Activated CD4-positive, alpha-beta memory T cell treated with anti-CD3 and anti-CD28 coated beads for 36 hours (primary cell): ENCODE measurements at regions of chr7 and their contacts with region 1.

Region 1: DNA sequence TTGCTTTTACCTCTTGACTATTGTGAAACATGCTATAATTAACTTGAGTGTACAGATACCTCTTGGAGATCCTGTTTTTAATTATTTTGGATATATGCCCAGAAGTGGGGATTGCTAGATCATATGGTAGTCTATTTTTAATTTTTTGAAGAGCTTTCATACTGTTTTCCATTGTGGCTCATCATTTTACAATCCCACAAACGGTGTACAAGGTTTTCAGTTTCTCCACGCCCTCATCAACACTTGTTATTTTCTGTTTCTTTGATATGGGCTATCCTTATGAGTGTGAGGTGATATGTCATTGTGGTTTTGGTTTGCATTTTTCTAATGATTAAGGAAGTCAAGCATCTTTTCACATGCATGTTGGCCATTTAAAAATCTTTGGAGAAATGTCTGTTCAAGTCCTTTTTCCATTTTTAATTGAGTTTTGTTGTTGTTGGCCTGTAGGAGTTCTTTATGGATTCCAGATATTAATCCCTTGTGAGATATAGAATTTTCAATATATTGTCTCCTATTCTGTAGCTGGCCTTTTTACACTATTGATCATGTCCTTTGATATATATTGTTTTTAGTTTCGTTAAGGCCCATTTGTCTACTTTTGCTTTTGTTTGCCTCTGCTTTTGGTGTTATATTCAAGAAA is 7.5 kb downstream of the AGK start:
- DNase-seq: peak; percentile 17
- H3K4me3 Mint-ChIP-seq: no peak overlapping the region
- H3K27ac Mint-ChIP-seq: peak overlapping the region; percentile 79
- H3K4me1 Mint-ChIP-seq: peaks cover 64% of the 10 kb centered on the region
- H3K27me3 Mint-ChIP-seq: no peaks in the 10 kb centered on the region

Region 2: DNA sequence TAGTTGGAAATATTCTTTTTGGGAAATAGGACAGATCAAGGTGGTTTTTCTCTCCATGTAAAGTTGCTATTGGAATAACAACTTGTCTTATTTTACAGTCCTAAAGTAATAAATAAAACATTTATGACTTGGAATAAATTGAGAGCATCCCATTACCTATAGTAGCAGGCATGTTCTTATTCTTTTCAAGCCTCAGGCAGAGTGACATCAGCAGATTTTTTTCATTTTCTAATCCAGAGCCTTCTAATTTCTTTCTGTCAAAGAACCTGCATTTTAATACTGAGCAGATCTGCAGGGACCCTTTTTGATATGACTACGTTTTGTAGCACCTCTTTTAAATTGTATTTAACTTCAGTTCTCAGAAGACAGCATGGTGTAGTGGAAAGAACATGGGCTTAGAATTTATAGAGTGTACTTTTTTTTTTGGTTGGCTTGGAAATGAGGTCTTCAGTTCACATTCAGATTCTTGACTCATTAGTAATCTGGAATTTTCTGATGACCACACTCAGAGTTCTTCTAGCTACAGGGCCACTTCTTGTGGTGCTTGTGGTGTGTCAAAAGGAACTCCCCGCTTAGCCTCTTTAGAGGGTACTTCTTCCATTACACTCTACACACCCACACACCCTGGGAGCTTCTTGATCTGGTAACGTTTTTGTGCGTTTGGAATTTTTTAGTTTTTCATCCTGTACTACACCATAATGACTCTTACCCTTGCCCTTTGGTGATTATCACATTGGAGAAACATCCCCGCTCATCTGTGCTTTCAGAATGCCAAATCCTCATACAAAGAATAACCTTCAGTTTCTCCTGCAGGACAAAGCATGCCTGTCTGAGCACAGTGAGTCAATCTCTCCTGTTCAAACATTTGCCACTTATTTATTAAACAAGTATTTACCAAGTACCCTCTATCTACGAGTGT is 27.2 kb after region 1 on chr7:
- CTCF ChIA-PET with region 1: interaction called, 3 read pairs
- POLR2A ChIA-PET with region 1: interaction called, 5 read pairs
- intact Hi-C with region 1: loop called (anchors 1 kb)
- DNase-seq: peak; percentile 62
- H3K4me3 Mint-ChIP-seq: no peak overlapping the region
- H3K27ac Mint-ChIP-seq: peak overlapping the region; percentile 65
- H3K4me1 Mint-ChIP-seq: peaks cover 45% of the 10 kb centered on the region
- H3K27me3 Mint-ChIP-seq: no peaks in the 10 kb centered on the region